Pancreas (tissue), 10 donors: ENCODE measurements at regions of chr5 and their contacts with region 1.

Region 1: DNA sequence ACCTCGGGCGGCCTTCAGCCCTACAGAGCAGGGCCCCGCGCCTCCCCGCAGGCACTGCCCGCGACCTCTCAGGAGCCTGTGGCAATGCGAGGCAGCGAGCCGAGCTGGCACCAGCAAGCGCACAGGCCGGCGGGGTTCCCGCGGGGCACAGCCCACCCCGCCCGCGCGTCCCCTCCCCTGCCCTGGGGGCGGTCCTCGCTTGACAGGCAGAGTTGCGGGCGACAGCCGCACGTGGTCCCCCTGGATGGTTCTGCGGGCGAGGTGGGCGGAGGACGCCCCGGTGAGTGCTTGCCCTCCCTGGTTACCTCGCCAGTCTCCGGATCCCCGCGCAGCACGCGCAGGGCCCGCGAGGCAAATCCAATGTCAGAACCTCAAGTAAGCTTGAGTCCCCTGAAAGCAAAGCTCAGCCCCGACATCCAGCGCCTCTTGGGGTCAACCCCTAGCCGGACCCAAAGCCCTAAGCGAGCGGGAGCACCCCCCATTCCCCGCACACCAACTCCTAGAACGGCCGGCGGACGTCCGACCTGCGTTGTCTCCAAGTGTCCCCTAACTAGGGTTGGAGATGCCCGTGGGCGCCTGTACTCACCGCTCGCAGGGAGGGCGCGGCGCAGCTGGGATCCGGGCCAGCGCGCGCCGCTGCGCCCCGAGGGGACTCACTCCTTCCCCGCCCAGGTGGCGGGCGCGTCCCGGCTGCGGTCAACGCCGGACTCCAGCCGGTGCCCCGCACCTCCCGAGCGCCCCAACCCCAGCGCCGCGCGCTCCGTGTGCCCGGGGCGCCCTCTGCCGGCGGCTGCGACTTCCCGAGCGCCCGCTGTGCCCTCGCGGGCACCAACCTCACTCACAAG is at the start of gene DRD1:
- DNase-seq: peak in 4 of 6 donors; percentile 52 to 90 (median 69)
- ATAC-seq: peak; percentile 93 to 97 (median 94)
- H3K4me3 ChIP-seq: peak within 1 kb of the TSS in 3 of 4 donors; percentile 12 to 42 (median 34)
- H3K27ac ChIP-seq: no peak within 1 kb of the TSS
- H3K4me1 ChIP-seq: peaks cover 0 to 7% (median 5%) of the 10 kb centered on the region in 3 donors
- H3K27me3 ChIP-seq: peaks cover 0 to 17% (median 0%) of the 10 kb centered on the region in 4 donors
- CTCF ChIP-seq: peak; percentile 51 to 75 (median 70)
- total RNA-seq, gene DRD1: 0.05 to 0.06 (median 0.06) TPM in 3 of 6 donors, not detected in the others

Region 2: GRCh38 chr5:174951146-174951780 is 493.0 kb before region 1 on chr5:
- intact Hi-C with region 1: loop called in 1 of 3 experiments (anchors 5 kb)
- DNase-seq: peak in 4 of 6 donors; percentile 45 to 70 (median 48)
- ATAC-seq: peak; percentile 84 to 97 (median 96)
- H3K4me3 ChIP-seq: no peak overlapping the region
- H3K27ac ChIP-seq: no peak overlapping the region
- H3K4me1 ChIP-seq: no peaks in the 10 kb centered on the region
- H3K27me3 ChIP-seq: no peaks in the 10 kb centered on the region
- CTCF ChIP-seq: peak; percentile 69 to 82 (median 75)